Right ventricle myocardium inferior (tissue), 1 donor: ENCODE measurements at regions of chr10 and their contacts with region 1.

Region 1: DNA sequence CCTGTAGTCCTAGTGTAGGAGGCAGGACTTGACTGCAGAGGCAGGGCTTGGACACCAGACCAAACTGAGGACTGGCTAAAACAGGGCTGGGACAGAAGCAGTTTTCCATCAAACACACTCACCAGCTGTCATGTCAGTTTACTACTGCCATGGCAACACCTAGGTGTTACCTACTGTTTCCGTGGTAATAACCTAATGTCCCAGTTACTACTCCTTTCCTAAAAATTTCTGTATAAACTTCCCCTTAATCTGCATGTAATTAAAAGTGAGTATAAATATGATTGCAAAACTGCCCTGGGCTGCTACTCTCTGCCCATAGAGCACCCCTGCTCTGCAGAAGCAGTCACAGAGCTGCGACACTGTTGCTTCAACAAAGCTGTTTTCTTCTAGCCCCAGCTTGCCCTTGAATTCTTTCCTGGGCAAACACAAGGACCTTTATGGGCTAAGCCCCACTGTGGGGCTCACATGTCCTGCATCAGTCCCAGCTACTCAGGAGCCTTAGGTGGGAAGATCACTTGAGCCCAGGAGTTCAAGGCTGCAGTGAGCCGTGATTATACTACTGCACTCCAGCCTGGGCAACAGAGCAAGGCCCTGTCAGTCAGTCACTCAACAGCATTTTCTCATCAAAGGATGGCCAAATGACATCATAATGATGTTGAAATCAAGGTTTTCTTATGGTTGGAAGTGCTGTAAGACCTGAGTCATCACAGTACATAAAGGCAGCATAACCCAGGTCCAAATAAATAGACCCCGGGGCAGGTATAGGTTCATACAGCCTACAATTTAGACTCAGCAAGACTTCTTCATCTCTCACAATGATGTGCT is 341.3 kb downstream of the PARD3 start:
- DNase-seq: no peak
- ATAC-seq: peak; percentile 74

Region 2: DNA sequence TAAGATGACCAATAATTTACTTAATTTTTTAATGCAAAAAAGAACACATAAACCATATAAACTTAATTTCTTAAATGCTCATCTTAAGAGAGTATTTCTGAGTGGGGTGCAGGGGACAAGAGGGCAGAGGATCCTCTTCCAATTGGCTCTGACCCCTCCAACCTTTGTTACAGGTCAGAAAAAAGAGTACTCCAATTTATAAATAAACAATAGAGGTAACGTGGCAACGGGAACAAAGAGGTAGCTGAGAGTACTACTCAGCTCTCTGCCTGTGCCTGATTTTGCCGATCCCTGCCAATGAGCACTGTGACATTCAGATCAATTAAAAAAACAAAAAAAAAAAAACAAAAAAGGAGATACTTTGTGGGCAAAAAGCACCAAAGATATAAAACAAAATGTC is 33.4 kb after region 1 on chr10:
- intact Hi-C with region 1: loop called (anchors 5 kb)
- DNase-seq: no peak
- ATAC-seq: peak; percentile 79